ENCODE measurements at regions of chr11 and their contacts with region 1.

Region 1: GRCh38 chr11:86990515-86990914 is 35.3 kb upstream of the FZD4 start:
- DNase-seq: no peak
- ATAC-seq: no peak
- H3K4me3 ChIP-seq: no peak overlapping the region
- H3K27ac ChIP-seq: no peak overlapping the region
- H3K4me1 ChIP-seq: peaks cover 0 to 26% (median 12%) of the 10 kb centered on the region in 12 donors
- H3K27me3 ChIP-seq: no peaks in the 10 kb centered on the region
- CTCF ChIP-seq: no peak
- POLR2A ChIP-seq: no peak

Region 2: DNA sequence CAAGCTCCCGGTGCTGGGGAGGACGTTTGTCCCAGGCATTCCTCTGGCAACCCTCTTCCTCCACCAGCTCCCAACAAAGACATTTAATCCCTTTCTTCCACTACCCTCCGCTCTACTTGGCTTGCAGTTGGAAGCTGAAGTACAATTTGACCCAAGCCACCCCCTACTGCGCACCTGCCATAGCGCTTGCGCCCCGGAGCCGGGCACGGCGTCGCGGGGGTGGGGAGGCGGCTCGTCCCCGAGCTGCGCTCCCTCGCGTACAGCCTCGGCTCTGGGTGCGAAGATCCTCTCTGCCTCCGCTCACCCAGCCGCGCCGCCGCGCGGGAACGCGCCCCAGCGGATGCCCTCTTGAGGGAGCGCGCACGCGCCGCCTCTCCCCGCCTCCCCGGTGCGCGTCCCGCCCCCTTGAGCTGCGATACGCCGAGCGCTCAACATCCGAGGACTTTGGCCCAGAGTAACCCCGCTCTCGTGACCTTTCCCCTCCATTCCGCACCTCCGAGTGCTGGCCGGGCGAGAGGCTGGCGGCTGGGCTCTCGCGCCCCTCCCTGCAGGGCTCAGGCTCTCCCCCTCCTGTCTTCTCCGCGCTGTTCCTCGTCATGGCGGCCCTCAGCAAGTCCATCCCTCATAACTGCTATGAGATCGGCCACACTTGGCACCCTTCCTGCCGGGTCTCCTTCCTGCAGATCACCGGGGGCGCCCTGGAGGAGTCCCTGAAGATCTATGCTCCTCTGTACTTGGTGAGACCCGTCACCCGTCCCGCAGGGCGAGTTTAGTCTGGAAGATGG is 47.1 kb after region 1 on chr11 and contains the start of gene TMEM135:
- intact Hi-C with region 1: loop called in 1 of 10 experiments (anchors 5 kb)
- DNase-seq: peak; percentile 95 to 97 (median 97)
- ATAC-seq: peak; percentile 99
- H3K4me3 ChIP-seq: peak within 1 kb of the TSS; percentile 39 to 94 (median 87)
- H3K27ac ChIP-seq: peak within 1 kb of the TSS; percentile 82 to 96 (median 88)
- H3K4me1 ChIP-seq: peaks cover 0 to 52% (median 32%) of the 10 kb centered on the region in 12 donors
- H3K27me3 ChIP-seq: no peaks in the 10 kb centered on the region
- CTCF ChIP-seq: peak in 2 of 12 donors; percentile 16 to 38
- POLR2A ChIP-seq: peak in 1 of 2 donors; percentile 84
- total RNA-seq, gene TMEM135: 11.6 to 22.7 (median 15.0) TPM

Region 3: DNA sequence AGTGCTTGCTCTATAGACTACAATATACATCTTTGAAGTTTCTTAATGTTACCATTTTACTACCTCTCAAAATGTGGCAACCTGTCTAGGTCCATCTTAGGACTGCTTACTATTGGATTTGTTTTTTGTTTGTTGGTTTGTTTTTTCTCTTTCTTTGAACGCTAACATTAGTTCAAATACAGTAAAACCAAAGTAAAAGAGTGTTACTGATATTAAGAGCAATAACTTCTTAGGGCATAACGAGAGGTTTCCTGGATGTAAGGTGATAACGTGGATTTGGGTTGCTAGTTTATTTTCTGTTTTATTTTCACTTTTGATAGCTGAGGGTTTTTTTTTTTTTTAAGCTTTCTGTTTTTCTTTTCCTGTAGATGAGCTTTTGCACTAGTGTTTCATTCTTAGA is 90.8 kb after region 1 on chr11:
- intact Hi-C with region 1: loop called in 1 of 10 experiments (anchors 10 kb)
- DNase-seq: no peak
- ATAC-seq: no peak
- H3K4me3 ChIP-seq: peak overlapping the region in 7 of 12 donors; percentile 5 to 44 (median 25)
- H3K27ac ChIP-seq: peak overlapping the region in 2 of 12 donors; percentile 11 to 37
- H3K4me1 ChIP-seq: peaks cover 0 to 20% (median 0%) of the 10 kb centered on the region in 12 donors
- H3K27me3 ChIP-seq: no peaks in the 10 kb centered on the region
- CTCF ChIP-seq: no peak
- POLR2A ChIP-seq: no peak